CD8-positive, alpha-beta T cell (primary cell): ENCODE measurements at regions of chr9 and their contacts with region 1.

Region 1: GRCh38 chr9:121059998-121060636 is 10.0 kb upstream of the C5 start:
- DNase-seq: peak in 5 of 9 experiments; percentile 5 to 74 (median 37)
- ATAC-seq: peak; percentile 26
- H3K4me3 ChIP-seq: no peak overlapping the region
- H3K4me3 Mint-ChIP-seq: no peak overlapping the region
- H3K27ac ChIP-seq: no peak overlapping the region
- H3K27ac Mint-ChIP-seq: no peak overlapping the region
- H3K4me1 ChIP-seq: no peaks in the 10 kb centered on the region
- H3K4me1 Mint-ChIP-seq: peaks cover 13% of the 10 kb centered on the region
- H3K27me3 ChIP-seq: no peaks in the 10 kb centered on the region
- H3K27me3 Mint-ChIP-seq: no peaks in the 10 kb centered on the region
- CTCF ChIP-seq: peak; percentile 73

Region 2: GRCh38 chr9:120619751-120620655 is 440.1 kb before region 1 on chr9:
- CTCF ChIA-PET with region 1: no interaction called
- POLR2A ChIA-PET with region 1: no interaction called
- intact Hi-C with region 1: loop called in 1 of 2 experiments (anchors 5 kb)
- DNase-seq: peak; percentile 8 to 76 (median 59)
- ATAC-seq: peak; percentile 65
- H3K4me3 ChIP-seq: no peak overlapping the region
- H3K4me3 Mint-ChIP-seq: no peak overlapping the region
- H3K27ac ChIP-seq: no peak overlapping the region
- H3K27ac Mint-ChIP-seq: no peak overlapping the region
- H3K4me1 ChIP-seq: no peaks in the 10 kb centered on the region
- H3K4me1 Mint-ChIP-seq: no peaks in the 10 kb centered on the region
- H3K27me3 ChIP-seq: no peaks in the 10 kb centered on the region
- H3K27me3 Mint-ChIP-seq: no peaks in the 10 kb centered on the region
- CTCF ChIP-seq: peak; percentile 98

Region 3: DNA sequence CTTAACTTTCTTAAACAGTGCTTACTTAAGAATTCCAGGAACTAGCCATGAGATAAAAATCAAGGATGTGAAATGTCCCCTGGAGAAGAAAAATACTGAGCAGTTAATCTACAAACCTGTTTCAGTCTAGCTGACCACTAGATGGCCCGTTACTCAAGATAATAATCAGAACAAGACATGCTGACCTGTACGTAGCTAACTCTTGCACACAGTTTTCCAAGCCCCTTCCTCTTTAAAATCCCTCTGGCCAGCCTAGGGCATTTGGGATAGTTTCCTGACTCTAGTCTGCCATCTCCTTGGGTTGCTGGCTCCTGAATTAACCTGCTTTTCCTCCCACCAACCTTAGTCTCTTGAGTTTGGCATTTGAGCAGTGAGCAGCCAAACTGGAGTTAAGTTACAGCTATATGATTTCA is 74.3 kb before region 1 on chr9:
- CTCF ChIA-PET with region 1: interaction called, 22 read pairs
- POLR2A ChIA-PET with region 1: no interaction called
- intact Hi-C with region 1: loop called (anchors 1 to 5 kb)
- DNase-seq: peak in 1 of 9 experiments; percentile 12
- ATAC-seq: no peak
- H3K4me3 ChIP-seq: no peak overlapping the region
- H3K4me3 Mint-ChIP-seq: no peak overlapping the region
- H3K27ac ChIP-seq: no peak overlapping the region
- H3K27ac Mint-ChIP-seq: no peak overlapping the region
- H3K4me1 ChIP-seq: no peaks in the 10 kb centered on the region
- H3K4me1 Mint-ChIP-seq: peaks cover 5% of the 10 kb centered on the region
- H3K27me3 ChIP-seq: no peaks in the 10 kb centered on the region
- H3K27me3 Mint-ChIP-seq: no peaks in the 10 kb centered on the region
- CTCF ChIP-seq: no peak

Region 4: GRCh38 chr9:121034529-121034928 is 25.6 kb before region 1 on chr9:
- CTCF ChIA-PET with region 1: interaction called, 16 read pairs
- POLR2A ChIA-PET with region 1: no interaction called
- intact Hi-C with region 1: no loop called
- DNase-seq: no peak
- ATAC-seq: no peak
- H3K4me3 ChIP-seq: no peak overlapping the region
- H3K4me3 Mint-ChIP-seq: no peak overlapping the region
- H3K27ac ChIP-seq: no peak overlapping the region
- H3K27ac Mint-ChIP-seq: no peak overlapping the region
- H3K4me1 ChIP-seq: no peaks in the 10 kb centered on the region
- H3K4me1 Mint-ChIP-seq: no peaks in the 10 kb centered on the region
- H3K27me3 ChIP-seq: no peaks in the 10 kb centered on the region
- H3K27me3 Mint-ChIP-seq: no peaks in the 10 kb centered on the region
- CTCF ChIP-seq: no peak

Region 5: DNA sequence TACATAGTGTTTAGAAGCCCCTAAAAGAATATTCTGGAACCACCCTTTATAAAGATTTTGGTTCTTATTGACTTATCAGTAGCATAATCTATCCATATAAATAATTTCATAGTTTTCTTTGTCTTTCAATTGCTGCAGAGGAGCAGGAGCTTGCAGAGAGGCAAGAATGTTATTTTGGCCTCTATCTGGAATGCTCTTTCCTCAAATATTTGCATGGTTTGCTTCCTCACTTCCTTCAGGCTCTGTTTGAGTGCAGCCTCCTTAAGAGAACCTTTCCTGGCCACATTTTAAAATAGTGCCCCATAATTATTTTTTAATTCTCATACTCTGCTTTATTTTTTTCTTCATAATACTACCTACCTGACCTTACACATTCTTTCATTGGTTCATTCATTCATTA is 11.5 kb before region 1 on chr9:
- CTCF ChIA-PET with region 1: interaction called, 22 read pairs
- POLR2A ChIA-PET with region 1: no interaction called
- intact Hi-C with region 1: no loop called
- DNase-seq: no peak
- ATAC-seq: no peak
- H3K4me3 ChIP-seq: no peak overlapping the region
- H3K4me3 Mint-ChIP-seq: no peak overlapping the region
- H3K27ac ChIP-seq: no peak overlapping the region
- H3K27ac Mint-ChIP-seq: no peak overlapping the region
- H3K4me1 ChIP-seq: no peaks in the 10 kb centered on the region
- H3K4me1 Mint-ChIP-seq: no peaks in the 10 kb centered on the region
- H3K27me3 ChIP-seq: peaks cover 0 to 2% of the 10 kb centered on the region in 2 experiments
- H3K27me3 Mint-ChIP-seq: no peaks in the 10 kb centered on the region
- CTCF ChIP-seq: no peak

Region 6: GRCh38 chr9:121261107-121261460 is 201.0 kb after region 1 on chr9:
- CTCF ChIA-PET with region 1: no interaction called
- POLR2A ChIA-PET with region 1: no interaction called
- intact Hi-C with region 1: no loop called
- DNase-seq: no peak
- ATAC-seq: no peak
- H3K4me3 ChIP-seq: no peak overlapping the region
- H3K4me3 Mint-ChIP-seq: no peak overlapping the region
- H3K27ac ChIP-seq: no peak overlapping the region
- H3K27ac Mint-ChIP-seq: no peak overlapping the region
- H3K4me1 ChIP-seq: no peaks in the 10 kb centered on the region
- H3K4me1 Mint-ChIP-seq: no peaks in the 10 kb centered on the region
- H3K27me3 ChIP-seq: no peaks in the 10 kb centered on the region
- H3K27me3 Mint-ChIP-seq: peaks cover 3% of the 10 kb centered on the region
- CTCF ChIP-seq: no peak